ENCODE measurements at regions of chr17 and their contacts with region 1.

Region 1: GRCh38 chr17:40726919-40727318 is 23.4 kb upstream of the KRT24 start:
- DNase-seq: no peak
- ATAC-seq: no peak
- H3K4me3 Mint-ChIP-seq: peak overlapping the region; percentile 12
- H3K27ac Mint-ChIP-seq: peak overlapping the region; percentile 74
- H3K4me1 Mint-ChIP-seq: peaks cover 26% of the 10 kb centered on the region
- H3K27me3 Mint-ChIP-seq: no peaks in the 10 kb centered on the region
- CTCF ChIP-seq: no peak

Region 2: DNA sequence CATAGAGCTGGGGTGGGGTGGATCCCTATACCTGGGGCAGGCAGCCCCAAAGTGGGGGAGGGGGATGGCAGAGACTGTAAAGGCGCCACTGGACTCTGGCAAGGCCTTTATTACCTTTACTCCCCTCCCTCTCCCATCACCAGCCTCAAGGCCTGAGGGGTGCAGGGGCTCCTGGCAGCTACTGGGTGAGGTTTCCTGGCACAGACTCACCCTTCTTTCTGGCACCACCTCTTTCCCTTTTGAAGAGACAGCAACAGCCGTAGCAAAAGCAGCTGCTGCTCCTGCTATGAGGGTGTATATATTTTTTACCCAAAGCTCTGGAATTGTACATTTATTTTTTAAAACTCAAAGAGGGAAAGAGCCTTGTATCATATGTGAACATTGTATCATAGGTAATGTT is 532.1 kb before region 1 on chr17:
- CTCF ChIA-PET with region 1: no interaction called
- POLR2A ChIA-PET with region 1: no interaction called
- intact Hi-C with region 1: no loop called
- DNase-seq: no peak
- ATAC-seq: no peak
- H3K4me3 Mint-ChIP-seq: no peak overlapping the region
- H3K27ac Mint-ChIP-seq: no peak overlapping the region
- H3K4me1 Mint-ChIP-seq: peaks cover 15% of the 10 kb centered on the region
- H3K27me3 Mint-ChIP-seq: peaks cover 7% of the 10 kb centered on the region
- CTCF ChIP-seq: no peak

Region 3: DNA sequence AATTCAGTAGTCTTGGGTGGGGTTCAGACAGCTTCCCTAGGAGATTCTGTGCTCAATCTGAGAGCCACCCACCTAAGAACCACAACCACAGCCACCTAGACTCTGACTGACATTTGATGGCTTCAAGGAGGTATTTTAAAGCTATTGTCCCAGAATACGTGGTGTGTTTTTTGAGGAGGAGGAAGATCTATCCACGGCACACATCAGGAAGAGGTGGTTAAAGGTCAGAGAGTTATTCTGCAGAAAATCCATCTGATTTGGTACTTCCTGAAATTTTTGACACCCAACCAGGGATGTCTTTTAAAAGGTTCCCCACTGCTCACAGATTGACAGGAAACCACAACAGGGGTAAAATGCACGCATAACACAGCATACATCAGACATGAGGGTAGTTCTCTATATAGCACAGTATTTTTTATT is 104.4 kb before region 1 on chr17:
- CTCF ChIA-PET with region 1: interaction called, 6 read pairs
- POLR2A ChIA-PET with region 1: interaction called, 3 read pairs
- intact Hi-C with region 1: loop called (anchors 1 kb)
- DNase-seq: no peak
- ATAC-seq: no peak
- H3K4me3 Mint-ChIP-seq: peak overlapping the region; percentile 53
- H3K27ac Mint-ChIP-seq: peak overlapping the region; percentile 67
- H3K4me1 Mint-ChIP-seq: peaks cover 71% of the 10 kb centered on the region
- H3K27me3 Mint-ChIP-seq: no peaks in the 10 kb centered on the region
- CTCF ChIP-seq: no peak

Region 4: GRCh38 chr17:40707720-40708119 is 19.2 kb before region 1 on chr17:
- CTCF ChIA-PET with region 1: no interaction called
- POLR2A ChIA-PET with region 1: interaction called, 10 read pairs
- intact Hi-C with region 1: no loop called
- DNase-seq: no peak
- ATAC-seq: no peak
- H3K4me3 Mint-ChIP-seq: no peak overlapping the region
- H3K27ac Mint-ChIP-seq: no peak overlapping the region
- H3K4me1 Mint-ChIP-seq: no peaks in the 10 kb centered on the region
- H3K27me3 Mint-ChIP-seq: peaks cover 24% of the 10 kb centered on the region
- CTCF ChIP-seq: no peak

Measured in activated B cell treated with CpG ODN at 0.5 μM for 24 hours (primary cell).